Naive thymus-derived CD4-positive, alpha-beta T cell (primary cell): ENCODE measurements at regions of chr3 and their contacts with region 1.

Region 1: DNA sequence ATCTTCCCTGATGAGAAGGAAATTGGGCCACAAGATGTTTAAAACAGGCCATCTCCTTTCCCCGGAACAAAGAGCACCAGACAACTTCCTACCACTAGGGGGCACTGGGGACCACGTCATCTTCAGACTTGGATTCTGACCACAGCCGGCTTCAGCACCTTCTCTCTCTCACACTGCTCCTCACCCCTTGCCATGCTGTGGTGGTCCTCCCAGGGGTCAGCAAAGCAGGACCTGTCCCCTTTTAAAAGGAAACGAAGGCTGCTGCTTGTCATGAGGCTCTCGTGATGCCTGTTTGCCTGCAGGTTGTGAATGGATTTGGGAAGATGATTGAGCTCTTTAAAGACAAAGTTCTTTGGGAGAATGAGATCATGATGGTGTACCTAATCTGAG is 16.2 kb downstream of the RFT1 start:
- DNase-seq: peak; percentile 53 to 86 (median 77)
- ATAC-seq: peak; percentile 83
- H3K4me3 ChIP-seq: no peak overlapping the region
- H3K4me3 Mint-ChIP-seq: no peak overlapping the region
- H3K27ac ChIP-seq: no peak overlapping the region
- H3K27ac Mint-ChIP-seq: no peak overlapping the region
- H3K4me1 ChIP-seq: peaks cover 0 to 8% of the 10 kb centered on the region in 2 donors
- H3K4me1 Mint-ChIP-seq: peaks cover 10 to 23% (median 17%) of the 10 kb centered on the region in 7 donors
- H3K27me3 ChIP-seq: no peaks in the 10 kb centered on the region
- H3K27me3 Mint-ChIP-seq: no peaks in the 10 kb centered on the region

Region 2: DNA sequence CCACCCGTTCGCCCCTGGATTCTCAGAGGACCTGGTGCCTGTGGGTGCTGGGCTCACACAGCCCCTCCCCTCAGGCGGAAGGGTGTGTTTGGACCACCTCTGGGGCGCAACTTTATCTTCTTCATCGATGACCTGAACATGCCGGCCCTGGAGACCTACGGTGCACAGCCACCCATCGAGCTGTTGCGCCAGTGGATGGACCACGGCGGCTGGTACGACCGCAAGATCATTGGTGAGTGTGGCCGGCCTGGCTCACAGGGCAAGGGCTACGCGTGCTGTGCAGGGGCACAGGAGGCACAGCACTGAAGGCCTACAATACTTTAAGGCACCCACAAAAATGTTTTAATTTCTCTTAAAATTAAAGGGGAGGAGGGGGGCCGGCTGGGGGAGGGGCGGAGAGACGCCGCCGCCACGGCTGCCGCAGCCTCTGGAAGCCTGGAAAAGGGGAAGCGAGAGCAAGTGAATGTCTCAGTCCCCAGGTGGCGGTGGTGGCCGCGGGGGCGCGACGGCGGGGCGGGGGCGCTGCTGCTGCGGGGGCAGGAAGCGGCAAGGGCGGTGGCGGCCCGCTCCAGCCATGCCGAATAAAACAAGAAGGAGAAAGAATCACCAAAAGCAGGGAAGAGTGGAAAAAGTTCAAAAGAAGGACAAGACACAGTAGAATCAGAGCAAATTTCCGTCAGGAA is 741.0 kb before region 1 on chr3:
- CTCF ChIA-PET with region 1: no interaction called
- POLR2A ChIA-PET with region 1: no interaction called
- intact Hi-C with region 1: no loop called
- DNase-seq: peak in 7 of 9 donors; percentile 11 to 34 (median 23)
- ATAC-seq: peak; percentile 65
- H3K4me3 ChIP-seq: no peak overlapping the region
- H3K4me3 Mint-ChIP-seq: peak overlapping the region in 9 of 10 donors; percentile 43 to 72 (median 59)
- H3K27ac ChIP-seq: no peak overlapping the region
- H3K27ac Mint-ChIP-seq: peak overlapping the region in 5 of 9 donors; percentile 7 to 75 (median 44)
- H3K4me1 ChIP-seq: peaks cover 0 to 8% of the 10 kb centered on the region in 2 donors
- H3K4me1 Mint-ChIP-seq: peaks cover 7 to 14% (median 12%) of the 10 kb centered on the region in 7 donors
- H3K27me3 ChIP-seq: no peaks in the 10 kb centered on the region
- H3K27me3 Mint-ChIP-seq: peaks cover 0 to 4% (median 0%) of the 10 kb centered on the region in 5 donors

Region 3: DNA sequence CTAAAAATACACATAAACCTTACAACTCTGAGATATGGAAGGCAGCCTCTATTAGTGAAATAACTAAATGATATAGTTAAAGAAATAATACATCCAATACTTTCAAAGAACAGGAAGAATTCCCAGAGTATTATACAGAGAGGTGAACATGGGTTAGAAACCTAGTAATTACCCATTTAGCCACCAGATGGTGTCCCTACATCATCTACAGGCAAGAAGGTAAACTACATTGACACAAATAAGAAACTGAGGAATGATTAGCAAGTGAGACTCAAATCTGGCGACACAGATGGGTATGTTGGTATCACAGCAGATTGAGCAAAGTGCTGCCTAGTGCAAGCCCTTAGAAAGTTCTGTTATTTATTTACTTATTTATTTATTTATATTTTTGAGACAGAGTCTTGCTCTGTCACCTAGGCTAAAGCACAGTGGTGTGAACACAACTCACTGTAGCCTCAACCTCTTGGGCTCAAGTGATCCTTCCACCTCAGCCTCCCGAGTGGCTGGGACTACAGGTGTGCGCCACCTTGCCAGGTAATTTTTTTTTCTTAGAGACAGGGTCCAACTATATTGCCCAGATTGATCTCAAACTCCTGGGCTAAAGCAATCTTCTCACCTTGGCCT is 371.5 kb before region 1 on chr3:
- CTCF ChIA-PET with region 1: no interaction called
- POLR2A ChIA-PET with region 1: no interaction called
- intact Hi-C with region 1: loop called in 1 of 2 experiments (anchors 1 kb)
- DNase-seq: peak in 5 of 9 donors; percentile 18 to 35 (median 20)
- ATAC-seq: peak; percentile 50
- H3K4me3 ChIP-seq: no peak overlapping the region
- H3K4me3 Mint-ChIP-seq: no peak overlapping the region
- H3K27ac ChIP-seq: no peak overlapping the region
- H3K27ac Mint-ChIP-seq: no peak overlapping the region
- H3K4me1 ChIP-seq: no peaks in the 10 kb centered on the region
- H3K4me1 Mint-ChIP-seq: peaks cover 0 to 2% (median 0%) of the 10 kb centered on the region in 7 donors
- H3K27me3 ChIP-seq: no peaks in the 10 kb centered on the region
- H3K27me3 Mint-ChIP-seq: no peaks in the 10 kb centered on the region

Region 4: DNA sequence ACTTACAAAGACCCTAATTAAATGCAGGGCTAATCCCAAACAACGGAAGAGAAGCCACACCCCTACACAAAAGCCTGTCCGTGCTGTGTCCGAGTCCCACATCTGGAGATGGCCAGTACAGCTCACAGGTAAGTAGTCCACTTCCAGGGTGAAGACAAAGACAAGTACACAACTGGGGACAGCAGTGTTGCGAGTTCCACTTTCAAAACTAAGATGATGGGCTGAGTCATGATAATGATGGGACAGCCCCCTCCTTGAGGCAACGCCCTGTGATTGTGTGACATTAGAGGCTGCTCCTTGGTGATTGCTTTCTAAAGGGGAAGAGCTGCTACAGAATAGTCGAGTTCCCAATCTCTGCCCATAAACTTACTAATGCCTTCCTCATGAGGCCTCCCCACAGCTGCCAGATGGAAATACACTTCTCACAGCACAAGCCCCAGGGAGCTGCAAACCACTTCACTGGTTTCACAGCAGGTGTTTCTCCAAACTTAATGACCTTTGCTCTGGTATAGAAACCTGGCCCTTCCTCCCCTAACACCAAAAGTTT is 11.3 kb before region 1 on chr3:
- CTCF ChIA-PET with region 1: no interaction called
- POLR2A ChIA-PET with region 1: interaction called, 4 read pairs
- intact Hi-C with region 1: loop called in 1 of 2 experiments (anchors 1 kb)
- DNase-seq: peak in 3 of 9 donors; percentile 13 to 52 (median 20)
- ATAC-seq: peak; percentile 84
- H3K4me3 ChIP-seq: no peak overlapping the region
- H3K4me3 Mint-ChIP-seq: peak overlapping the region in 8 of 10 donors; percentile 10 to 82 (median 68)
- H3K27ac ChIP-seq: no peak overlapping the region
- H3K27ac Mint-ChIP-seq: peak overlapping the region in 8 of 9 donors; percentile 30 to 95 (median 72)
- H3K4me1 ChIP-seq: peaks cover 0 to 23% of the 10 kb centered on the region in 2 donors
- H3K4me1 Mint-ChIP-seq: peaks cover 29 to 81% (median 59%) of the 10 kb centered on the region in 7 donors
- H3K27me3 ChIP-seq: no peaks in the 10 kb centered on the region
- H3K27me3 Mint-ChIP-seq: no peaks in the 10 kb centered on the region

Region 5: GRCh38 chr3:53195602-53196574 is 81.9 kb after region 1 on chr3:
- CTCF ChIA-PET with region 1: interaction called, 70 read pairs
- POLR2A ChIA-PET with region 1: interaction called, 3 read pairs
- intact Hi-C with region 1: loop called (anchors 1 kb)
- DNase-seq: peak; percentile 21 to 75 (median 55)
- ATAC-seq: peak; percentile 79
- H3K4me3 ChIP-seq: no peak overlapping the region
- H3K4me3 Mint-ChIP-seq: peak overlapping the region in 4 of 10 donors; percentile 6 to 62 (median 38)
- H3K27ac ChIP-seq: no peak overlapping the region
- H3K27ac Mint-ChIP-seq: peak overlapping the region in 1 of 9 donors; percentile 27
- H3K4me1 ChIP-seq: peaks cover 0 to 4% of the 10 kb centered on the region in 2 donors
- H3K4me1 Mint-ChIP-seq: peaks cover 5 to 12% (median 7%) of the 10 kb centered on the region in 7 donors
- H3K27me3 ChIP-seq: no peaks in the 10 kb centered on the region
- H3K27me3 Mint-ChIP-seq: peaks cover 0 to 6% (median 0%) of the 10 kb centered on the region in 5 donors

Region 6: DNA sequence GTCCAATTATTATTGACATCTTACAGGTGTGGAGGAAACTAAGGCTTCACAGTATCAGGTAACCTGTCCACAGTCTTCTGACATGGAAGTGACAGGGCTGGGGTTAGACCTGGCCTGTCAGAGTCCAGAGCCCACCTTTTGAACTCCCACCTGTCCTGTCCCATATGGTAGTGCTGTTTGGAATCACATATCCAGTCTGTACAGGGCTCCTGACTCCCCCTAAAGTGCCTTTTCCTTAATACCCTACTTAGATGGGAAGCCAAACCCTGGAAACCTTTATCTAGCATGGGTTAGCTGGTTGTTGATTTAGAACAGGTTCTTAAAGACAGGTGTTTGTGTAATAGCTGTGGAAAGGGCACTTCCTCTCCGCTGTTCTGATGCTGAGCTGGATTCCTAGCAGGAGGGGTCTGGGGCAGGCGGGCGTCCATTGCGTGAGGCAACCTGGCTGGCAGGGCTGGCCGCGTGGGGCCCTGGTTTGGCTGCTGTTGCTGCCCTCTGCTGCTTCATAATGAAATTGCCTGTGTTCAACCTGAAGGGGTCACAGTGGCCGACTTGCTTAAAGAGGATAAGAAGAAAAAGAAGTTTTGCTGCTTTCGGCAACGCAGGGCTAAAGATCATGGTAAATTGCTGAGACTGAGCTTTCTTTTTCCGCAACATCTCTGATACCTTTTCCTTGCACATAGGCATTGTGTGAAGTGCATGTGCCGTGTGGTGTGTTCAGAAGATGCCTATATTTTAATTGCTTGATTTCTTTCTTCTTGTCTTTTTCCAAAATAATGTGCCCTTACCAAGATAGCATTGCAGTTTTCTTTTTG is 596.1 kb after region 1 on chr3:
- CTCF ChIA-PET with region 1: interaction called, 3 read pairs
- POLR2A ChIA-PET with region 1: no interaction called
- intact Hi-C with region 1: loop called in 1 of 2 experiments (anchors 1 kb)
- DNase-seq: peak; percentile 15 to 62 (median 46)
- ATAC-seq: peak; percentile 85
- H3K4me3 ChIP-seq: no peak overlapping the region
- H3K4me3 Mint-ChIP-seq: no peak overlapping the region
- H3K27ac ChIP-seq: no peak overlapping the region
- H3K27ac Mint-ChIP-seq: no peak overlapping the region
- H3K4me1 ChIP-seq: no peaks in the 10 kb centered on the region
- H3K4me1 Mint-ChIP-seq: peaks cover 0 to 22% (median 0%) of the 10 kb centered on the region in 7 donors
- H3K27me3 ChIP-seq: no peaks in the 10 kb centered on the region
- H3K27me3 Mint-ChIP-seq: peaks cover 0 to 7% (median 5%) of the 10 kb centered on the region in 5 donors